ENCODE measurements at regions of chr12 and their contacts with region 1.

Region 1: DNA sequence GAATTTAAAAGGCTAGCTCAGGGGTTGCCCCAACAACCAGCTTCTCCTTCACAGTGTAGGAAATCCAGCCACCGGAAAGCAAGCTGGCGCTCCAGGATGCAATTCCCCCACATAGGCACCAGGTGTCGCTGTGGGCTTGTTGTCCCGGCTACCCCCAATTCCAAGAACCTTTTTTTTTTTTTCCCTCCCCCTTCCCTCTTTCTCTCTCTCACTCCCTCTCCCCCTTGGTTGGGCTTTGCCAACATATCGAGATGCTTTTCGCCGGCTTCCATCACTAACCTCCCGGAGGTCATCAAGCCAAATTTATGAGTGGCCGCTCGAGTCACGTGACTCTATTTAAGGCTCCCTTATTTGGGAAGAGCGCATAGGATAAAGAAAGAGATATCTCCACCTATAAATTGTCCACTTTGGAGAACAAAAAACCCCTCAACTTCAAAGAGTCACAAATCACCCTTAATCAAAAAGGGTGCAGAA is at the start of gene HOXC5:
- DNase-seq: peak; percentile 73
- H3K4me3 Mint-ChIP-seq: peak within 1 kb of the TSS; percentile 53
- H3K27ac Mint-ChIP-seq: peak within 1 kb of the TSS; percentile 18
- H3K4me1 Mint-ChIP-seq: peaks cover 20% of the 10 kb centered on the region
- H3K27me3 Mint-ChIP-seq: peaks cover 66% of the 10 kb centered on the region
- total RNA-seq, gene HOXC5: not detected

Region 2: GRCh38 chr12:53995378-53996239 is 37.1 kb before region 1 on chr12:
- CTCF ChIA-PET with region 1: interaction called, 7 read pairs
- POLR2A ChIA-PET with region 1: no interaction called
- intact Hi-C with region 1: loop called (anchors 5 kb)
- DNase-seq: peak; percentile 44
- H3K4me3 Mint-ChIP-seq: peak overlapping the region; percentile 73
- H3K27ac Mint-ChIP-seq: no peak overlapping the region
- H3K4me1 Mint-ChIP-seq: peaks cover 30% of the 10 kb centered on the region
- H3K27me3 Mint-ChIP-seq: peaks cover 82% of the 10 kb centered on the region

Region 3: GRCh38 chr12:54005853-54006686 is 26.6 kb before region 1 on chr12:
- CTCF ChIA-PET with region 1: interaction called, 29 read pairs
- POLR2A ChIA-PET with region 1: no interaction called
- intact Hi-C with region 1: loop called (anchors 2 kb)
- DNase-seq: peak; percentile 89
- H3K4me3 Mint-ChIP-seq: peak overlapping the region; percentile 68
- H3K27ac Mint-ChIP-seq: no peak overlapping the region
- H3K4me1 Mint-ChIP-seq: peaks cover 22% of the 10 kb centered on the region
- H3K27me3 Mint-ChIP-seq: peaks cover 91% of the 10 kb centered on the region

Region 4: GRCh38 chr12:54017878-54018467 is 14.7 kb before region 1 on chr12:
- CTCF ChIA-PET with region 1: interaction called, 26 read pairs
- POLR2A ChIA-PET with region 1: no interaction called
- intact Hi-C with region 1: loop called (anchors 2 kb)
- DNase-seq: peak; percentile 73
- H3K4me3 Mint-ChIP-seq: peak overlapping the region; percentile 72
- H3K27ac Mint-ChIP-seq: no peak overlapping the region
- H3K4me1 Mint-ChIP-seq: peaks cover 19% of the 10 kb centered on the region
- H3K27me3 Mint-ChIP-seq: peaks cover 69% of the 10 kb centered on the region

Region 5: GRCh38 chr12:54126696-54127537 is 94.3 kb after region 1 on chr12:
- CTCF ChIA-PET with region 1: no interaction called
- POLR2A ChIA-PET with region 1: no interaction called
- intact Hi-C with region 1: no loop called
- DNase-seq: peak; percentile 23
- H3K4me3 Mint-ChIP-seq: no peak overlapping the region
- H3K27ac Mint-ChIP-seq: no peak overlapping the region
- H3K4me1 Mint-ChIP-seq: peaks cover 9% of the 10 kb centered on the region
- H3K27me3 Mint-ChIP-seq: peaks cover 55% of the 10 kb centered on the region

Region 6: GRCh38 chr12:54191550-54192022 is 158.9 kb after region 1 on chr12:
- CTCF ChIA-PET with region 1: interaction called, 81 read pairs
- POLR2A ChIA-PET with region 1: interaction called, 4 read pairs
- intact Hi-C with region 1: loop called (anchors 1 kb)
- DNase-seq: peak; percentile 83
- H3K4me3 Mint-ChIP-seq: no peak overlapping the region
- H3K27ac Mint-ChIP-seq: no peak overlapping the region
- H3K4me1 Mint-ChIP-seq: peaks cover 17% of the 10 kb centered on the region
- H3K27me3 Mint-ChIP-seq: peaks cover 24% of the 10 kb centered on the region

Region 7: GRCh38 chr12:54201001-54201794 is 168.5 kb after region 1 on chr12:
- CTCF ChIA-PET with region 1: interaction called, 81 read pairs
- POLR2A ChIA-PET with region 1: interaction called, 3 read pairs
- intact Hi-C with region 1: no loop called
- DNase-seq: peak; percentile 77
- H3K4me3 Mint-ChIP-seq: no peak overlapping the region
- H3K27ac Mint-ChIP-seq: no peak overlapping the region
- H3K4me1 Mint-ChIP-seq: peaks cover 3% of the 10 kb centered on the region
- H3K27me3 Mint-ChIP-seq: peaks cover 48% of the 10 kb centered on the region

Region 8: GRCh38 chr12:54207484-54208294 is 175.0 kb after region 1 on chr12:
- CTCF ChIA-PET with region 1: interaction called, 55 read pairs
- POLR2A ChIA-PET with region 1: no interaction called
- intact Hi-C with region 1: no loop called
- DNase-seq: peak; percentile 86
- H3K4me3 Mint-ChIP-seq: no peak overlapping the region
- H3K27ac Mint-ChIP-seq: no peak overlapping the region
- H3K4me1 Mint-ChIP-seq: no peaks in the 10 kb centered on the region
- H3K27me3 Mint-ChIP-seq: peaks cover 19% of the 10 kb centered on the region

Region 9: GRCh38 chr12:54497883-54498282 is 465.2 kb after region 1 on chr12:
- CTCF ChIA-PET with region 1: no interaction called
- POLR2A ChIA-PET with region 1: no interaction called
- intact Hi-C with region 1: no loop called
- DNase-seq: no peak
- H3K4me3 Mint-ChIP-seq: peak overlapping the region; percentile 100
- H3K27ac Mint-ChIP-seq: peak overlapping the region; percentile 98
- H3K4me1 Mint-ChIP-seq: peaks cover 40% of the 10 kb centered on the region
- H3K27me3 Mint-ChIP-seq: no peaks in the 10 kb centered on the region